Thyroid gland (tissue), 4 donors: ENCODE measurements at regions of chr17 and their contacts with region 1.

Region 1: GRCh38 chr17:63082273-63082993 is 116.4 kb downstream of the TANC2 start:
- DNase-seq: no peak
- H3K4me3 ChIP-seq: no peak overlapping the region
- H3K27ac ChIP-seq: no peak overlapping the region
- H3K4me1 ChIP-seq: no peaks in the 10 kb centered on the region
- H3K27me3 ChIP-seq: no peaks in the 10 kb centered on the region
- CTCF ChIP-seq: peak in 1 of 6 experiments; percentile 39
- POLR2A ChIP-seq: no peak

Region 2: GRCh38 chr17:63381101-63381729 is 298.8 kb after region 1 on chr17:
- intact Hi-C with region 1: no loop called
- DNase-seq: no peak
- H3K4me3 ChIP-seq: no peak overlapping the region
- H3K27ac ChIP-seq: no peak overlapping the region
- H3K4me1 ChIP-seq: no peaks in the 10 kb centered on the region
- H3K27me3 ChIP-seq: no peaks in the 10 kb centered on the region
- CTCF ChIP-seq: no peak
- POLR2A ChIP-seq: no peak

Region 3: GRCh38 chr17:63406689-63407330 is 324.4 kb after region 1 on chr17:
- intact Hi-C with region 1: loop called (anchors 10 kb)
- DNase-seq: peak; percentile 69 to 78
- H3K4me3 ChIP-seq: no peak overlapping the region
- H3K27ac ChIP-seq: no peak overlapping the region
- H3K4me1 ChIP-seq: no peaks in the 10 kb centered on the region
- H3K27me3 ChIP-seq: no peaks in the 10 kb centered on the region
- CTCF ChIP-seq: peak; percentile 36 to 84 (median 74)
- POLR2A ChIP-seq: no peak